A673 (cell line): ENCODE measurements at regions of chr2 and their contacts with region 1.

Region 1: DNA sequence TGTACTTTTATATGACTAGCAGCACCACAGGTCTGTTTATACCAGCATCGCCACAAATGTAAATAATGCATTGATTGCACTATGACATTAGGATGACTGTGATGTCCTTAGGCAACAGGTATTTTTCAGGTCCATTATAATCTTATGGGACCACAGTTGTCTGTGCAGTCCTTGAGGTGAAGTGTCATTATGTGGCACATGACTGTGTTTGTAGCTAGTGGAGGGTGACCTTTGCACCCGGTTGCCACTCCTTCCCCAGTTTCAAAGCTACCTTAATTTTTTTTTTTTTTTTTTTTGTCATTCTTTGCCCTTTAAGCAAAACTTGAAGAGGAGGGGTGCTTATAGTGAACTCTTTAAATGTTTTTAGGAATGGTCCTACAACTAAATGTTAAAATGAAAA is 386.4 kb downstream of the THSD7B start:
- DNase-seq: no peak
- H3K4me3 ChIP-seq: no peak overlapping the region
- H3K27ac ChIP-seq: no peak overlapping the region
- H3K4me1 ChIP-seq: no peaks in the 10 kb centered on the region
- H3K27me3 ChIP-seq: no peaks in the 10 kb centered on the region
- CTCF ChIP-seq: no peak

Region 2: DNA sequence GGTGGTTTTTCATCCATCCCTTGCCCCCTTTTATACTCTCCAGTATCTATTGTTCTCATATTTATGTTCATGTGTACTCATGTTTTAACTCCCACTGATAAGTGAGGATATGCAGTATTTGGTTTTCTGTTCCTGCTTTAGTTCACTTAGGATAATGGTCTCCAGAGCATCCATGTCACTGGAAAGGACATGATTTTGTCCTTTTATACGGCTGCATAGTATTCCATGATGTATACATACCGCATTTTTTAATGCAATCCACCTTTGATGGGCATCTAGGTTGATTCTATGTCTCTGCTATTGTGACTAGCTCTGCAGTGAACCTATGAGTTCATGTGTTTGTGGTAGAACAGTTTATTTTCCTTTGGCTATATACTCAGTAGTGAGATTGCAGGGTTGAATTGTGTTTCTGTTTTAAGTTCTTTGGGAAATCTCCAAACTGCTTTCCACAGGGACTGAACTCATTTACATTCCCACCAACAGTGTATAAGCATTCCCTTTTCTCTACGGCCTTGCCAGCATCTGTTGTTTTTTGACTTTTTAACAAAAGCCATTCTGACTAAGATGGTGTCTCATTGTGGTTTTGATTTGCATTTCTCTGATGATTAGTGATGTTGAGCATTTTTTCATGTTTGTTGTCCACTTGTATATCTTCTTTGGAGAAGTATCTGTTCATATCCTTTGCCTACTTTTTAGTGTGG is 33.8 kb after region 1 on chr2:
- CTCF ChIA-PET with region 1: no interaction called
- POLR2A ChIA-PET with region 1: no interaction called
- intact Hi-C with region 1: loop called (anchors 5 kb)
- DNase-seq: no peak
- H3K4me3 ChIP-seq: no peak overlapping the region
- H3K27ac ChIP-seq: no peak overlapping the region
- H3K4me1 ChIP-seq: no peaks in the 10 kb centered on the region
- H3K27me3 ChIP-seq: no peaks in the 10 kb centered on the region
- CTCF ChIP-seq: no peak